Dendritic cell treated with granulocyte-macrophage colony-stimulating factor and Interleukin-4, amounts not matched to agents 40 ng/mL and 50 ng/mL, for 4 days (primary cell): ENCODE measurements at regions of chr11 and their contacts with region 1.

Region 1: GRCh38 chr11:73787643-73788537 is at the start of gene MRPL48:
- H3K4me3 Mint-ChIP-seq: peak within 1 kb of the TSS; percentile 96
- H3K27ac Mint-ChIP-seq: peak within 1 kb of the TSS; percentile 94
- H3K4me1 Mint-ChIP-seq: no peaks in the 10 kb centered on the region
- H3K27me3 Mint-ChIP-seq: no peaks in the 10 kb centered on the region

Region 2: GRCh38 chr11:73760679-73761402 is 27.0 kb before region 1 on chr11 and contains the start of gene RAB6A:
- intact Hi-C with region 1: loop called (anchors 5 kb)
- H3K4me3 Mint-ChIP-seq: peak within 1 kb of the TSS; percentile 92
- H3K27ac Mint-ChIP-seq: peak within 1 kb of the TSS; percentile 94
- H3K4me1 Mint-ChIP-seq: peaks cover 48% of the 10 kb centered on the region
- H3K27me3 Mint-ChIP-seq: peaks cover 2% of the 10 kb centered on the region

Region 3: GRCh38 chr11:73851046-73851764 is 63.3 kb after region 1 on chr11:
- intact Hi-C with region 1: no loop called
- H3K4me3 Mint-ChIP-seq: no peak overlapping the region
- H3K27ac Mint-ChIP-seq: no peak overlapping the region
- H3K4me1 Mint-ChIP-seq: peaks cover 10% of the 10 kb centered on the region
- H3K27me3 Mint-ChIP-seq: no peaks in the 10 kb centered on the region

Region 4: DNA sequence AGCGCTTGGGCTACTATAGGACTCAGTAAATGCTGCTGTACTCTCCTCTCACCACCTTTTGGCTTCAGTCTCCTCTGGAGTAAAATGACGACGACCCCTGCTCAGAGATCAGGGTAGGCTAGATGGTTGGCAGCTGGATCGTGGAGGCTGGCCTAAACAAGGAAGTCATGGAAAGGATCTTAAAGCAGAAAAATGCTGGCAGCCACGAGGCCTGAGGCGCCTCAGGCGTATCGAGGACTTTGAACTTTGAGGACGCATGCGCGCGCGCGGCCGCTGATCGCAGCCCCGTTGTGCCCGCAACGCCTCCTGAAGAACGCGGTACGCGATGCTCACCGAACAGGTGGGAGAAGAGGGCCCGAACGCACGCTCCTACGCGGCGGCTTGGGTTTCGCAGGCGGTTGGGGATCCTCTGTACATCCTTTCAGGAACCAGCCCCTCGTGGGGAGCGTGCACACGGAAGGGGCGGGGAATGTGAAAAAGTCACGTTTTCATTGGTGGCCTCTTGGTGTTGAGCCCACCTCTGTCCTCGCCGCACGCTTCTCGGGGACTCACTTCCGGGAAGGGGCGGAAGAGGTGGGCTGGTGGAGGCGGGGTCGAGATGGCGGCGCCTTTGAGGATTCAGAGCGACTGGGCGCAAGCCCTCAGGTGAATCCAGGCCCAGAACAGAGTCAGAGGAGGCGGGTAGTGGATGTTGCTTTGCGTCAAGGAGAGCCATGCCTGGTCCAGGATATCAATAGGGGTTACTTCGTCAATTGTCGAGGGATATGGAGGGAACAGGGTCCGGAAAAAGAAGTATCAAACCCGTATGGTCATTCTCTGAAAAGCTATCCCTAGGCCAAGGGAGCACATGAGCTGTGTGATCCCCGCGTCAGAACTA is 88.8 kb after region 1 on chr11 and contains the starts of genes COA4 and PAAF1:
- intact Hi-C with region 1: loop called (anchors 5 kb)
- H3K4me3 Mint-ChIP-seq: peak within 1 kb of the TSS; percentile 92
- H3K27ac Mint-ChIP-seq: peak within 1 kb of the TSS; percentile 88
- H3K4me1 Mint-ChIP-seq: peaks cover 16% of the 10 kb centered on the region
- H3K27me3 Mint-ChIP-seq: no peaks in the 10 kb centered on the region